H1 (cell line): ENCODE measurements at regions of chr7 and their contacts with region 1.

Region 1: GRCh38 chr7:106176414-106177299 is 64.5 kb upstream of the SYPL1 start:
- DNase-seq: peak; percentile 81 to 96
- H3K4me3 ChIP-seq: no peak overlapping the region
- H3K27ac ChIP-seq: no peak overlapping the region
- H3K4me1 ChIP-seq: peaks cover 0 to 5% (median 1%) of the 10 kb centered on the region in 4 experiments; a peak in 2 of 7 replicates
- H3K27me3 ChIP-seq: no peaks in the 10 kb centered on the region
- CTCF ChIP-seq: peak; percentile 91 to 99 (median 99)
- EP300 ChIP-seq: peak in 1 of 2 experiments; percentile 50; a peak in 1 of 3 replicates
- POLR2A ChIP-seq: peak in 1 of 2 experiments; percentile 49; a peak in 2 of 3 replicates
- RAD21 ChIP-seq: peak; percentile 99

Region 2: DNA sequence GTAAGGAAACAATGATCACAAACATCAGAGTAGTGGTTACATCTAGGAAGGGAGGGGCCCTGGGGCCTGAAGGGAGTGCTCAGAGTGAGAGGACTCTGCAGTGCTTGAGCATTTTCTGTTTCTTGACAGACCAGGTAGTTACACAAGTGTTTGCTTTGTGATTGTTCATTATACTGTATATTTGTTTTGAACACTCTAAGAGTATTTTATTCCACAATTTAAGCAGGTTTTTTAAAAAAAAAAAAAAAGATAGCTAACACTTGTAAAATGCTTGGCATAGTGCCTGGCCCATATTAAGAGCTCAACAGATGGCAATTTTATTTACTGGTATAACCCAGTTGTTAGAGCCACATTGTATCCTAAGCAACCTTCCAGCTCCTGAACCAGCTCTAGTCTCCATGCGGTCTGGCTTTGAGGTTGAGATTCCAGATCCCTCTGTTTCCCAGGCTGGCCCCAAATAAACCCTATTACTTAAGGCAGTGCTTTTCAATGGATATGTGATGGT is 280.2 kb before region 1 on chr7:
- CTCF ChIA-PET with region 1: no interaction called
- POLR2A ChIA-PET with region 1: no interaction called
- DNase-seq: no peak
- H3K4me3 ChIP-seq: no peak overlapping the region
- H3K27ac ChIP-seq: no peak overlapping the region
- H3K4me1 ChIP-seq: no peaks in the 10 kb centered on the region
- H3K27me3 ChIP-seq: no peaks in the 10 kb centered on the region
- CTCF ChIP-seq: no peak
- EP300 ChIP-seq: no peak
- POLR2A ChIP-seq: no peak
- RAD21 ChIP-seq: no peak

Region 3: GRCh38 chr7:106216517-106216922 is 39.9 kb after region 1 on chr7:
- CTCF ChIA-PET with region 1: interaction called, 11 read pairs
- POLR2A ChIA-PET with region 1: no interaction called
- DNase-seq: no peak
- H3K4me3 ChIP-seq: no peak overlapping the region
- H3K27ac ChIP-seq: no peak overlapping the region
- H3K4me1 ChIP-seq: no peaks in the 10 kb centered on the region
- H3K27me3 ChIP-seq: no peaks in the 10 kb centered on the region
- CTCF ChIP-seq: no peak
- EP300 ChIP-seq: no peak
- POLR2A ChIP-seq: no peak
- RAD21 ChIP-seq: no peak

Region 4: DNA sequence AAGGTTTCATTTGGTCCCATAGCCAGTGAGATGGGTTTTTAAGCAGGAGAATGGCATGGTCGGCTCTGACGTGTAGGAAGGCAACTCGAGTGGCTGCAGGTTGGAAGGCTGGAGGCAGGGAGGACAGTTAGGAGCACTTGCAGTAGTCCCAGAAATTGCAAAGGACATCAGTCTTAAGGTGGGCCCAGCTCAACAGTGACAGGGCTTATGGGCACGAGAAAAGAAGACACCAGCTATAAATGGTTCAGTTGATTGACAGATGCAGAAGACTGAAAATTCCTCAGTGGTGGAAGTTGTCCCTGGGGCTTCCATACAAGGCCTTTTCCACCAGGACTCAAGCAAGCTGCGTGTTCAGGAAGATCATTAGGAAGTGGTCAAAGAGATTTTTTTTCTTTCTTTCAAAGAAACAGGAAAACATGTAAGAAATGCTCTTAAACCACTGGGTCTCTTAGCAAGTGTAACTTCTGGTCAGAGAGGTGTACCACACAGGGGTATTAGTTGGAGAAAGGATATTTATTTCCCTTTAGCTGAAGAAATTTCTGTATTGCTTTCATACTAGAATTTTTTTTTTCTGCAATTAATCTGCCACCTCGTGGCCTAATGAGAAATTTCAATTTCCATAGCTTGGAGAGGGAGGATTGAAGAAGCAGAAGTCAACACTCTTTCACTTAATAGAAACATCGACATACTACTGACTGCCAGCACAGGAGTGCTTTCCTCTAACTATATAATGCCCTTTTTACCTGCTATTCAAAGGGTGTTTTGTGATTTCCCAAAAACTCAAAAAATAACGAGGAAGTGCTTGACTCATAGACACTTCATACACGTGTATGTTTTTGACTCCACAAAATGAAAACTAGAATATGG is 285.6 kb after region 1 on chr7:
- CTCF ChIA-PET with region 1: interaction called, 17 read pairs
- POLR2A ChIA-PET with region 1: no interaction called
- DNase-seq: no peak
- H3K4me3 ChIP-seq: no peak overlapping the region
- H3K27ac ChIP-seq: no peak overlapping the region
- H3K4me1 ChIP-seq: 0 out of 7 replicates have a peak, but pooled peaks cover 0 to 3% (median 0%) of the 10 kb centered on the region in 4 experiments
- H3K27me3 ChIP-seq: no peaks in the 10 kb centered on the region
- CTCF ChIP-seq: peak in 2 of 3 experiments; percentile 13; a peak in 2 of 4 replicates
- EP300 ChIP-seq: no peak
- POLR2A ChIP-seq: no peak
- RAD21 ChIP-seq: peak; percentile 36 to 40

Region 5: DNA sequence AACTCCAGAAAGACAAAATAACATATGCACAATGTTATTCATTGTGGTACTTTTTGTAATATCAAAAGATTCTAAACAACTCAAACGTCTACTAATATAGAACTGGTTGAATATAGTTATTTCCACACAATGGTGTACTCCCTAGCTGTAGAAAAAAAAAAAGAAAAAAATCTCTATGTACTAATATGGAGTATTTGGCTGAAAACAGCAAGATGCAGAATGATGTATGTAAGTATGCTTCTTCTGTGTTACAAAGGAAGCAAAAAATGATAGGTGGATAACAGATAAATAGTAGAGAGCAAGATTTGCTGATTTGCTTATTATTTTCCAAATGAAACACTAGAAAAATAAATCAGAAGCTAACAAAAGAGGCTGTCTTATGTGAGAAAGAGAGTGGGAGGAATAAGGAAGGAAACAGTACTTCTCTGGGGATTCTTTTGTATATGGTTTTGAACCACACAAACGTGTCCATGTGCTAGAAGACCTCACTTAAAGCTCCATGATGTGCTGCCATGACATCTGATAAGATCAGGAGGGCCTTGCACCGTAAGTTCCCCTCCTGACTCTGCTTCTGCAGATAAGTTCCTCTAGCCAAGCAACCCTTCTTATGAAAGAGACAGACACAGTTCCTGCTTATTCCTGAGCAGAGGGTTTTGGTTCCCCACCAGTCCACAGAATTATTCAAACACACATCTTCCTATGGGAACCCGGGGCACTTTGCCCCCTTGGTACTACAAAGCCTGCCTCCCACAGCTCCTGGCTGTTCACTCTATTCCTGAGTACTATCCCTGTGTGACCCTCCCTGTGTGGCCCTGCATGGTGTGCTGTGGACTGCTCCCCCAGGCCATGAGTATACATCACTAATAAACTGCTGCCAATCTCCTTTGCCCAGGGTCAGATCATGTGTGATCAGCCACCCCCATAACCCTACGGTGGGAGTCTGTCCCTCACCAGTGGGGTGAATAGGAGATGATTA is 325.2 kb after region 1 on chr7:
- CTCF ChIA-PET with region 1: no interaction called
- POLR2A ChIA-PET with region 1: no interaction called
- DNase-seq: no peak
- H3K4me3 ChIP-seq: no peak overlapping the region
- H3K27ac ChIP-seq: no peak overlapping the region
- H3K4me1 ChIP-seq: no peaks in the 10 kb centered on the region
- H3K27me3 ChIP-seq: no peaks in the 10 kb centered on the region
- CTCF ChIP-seq: no peak
- EP300 ChIP-seq: no peak
- POLR2A ChIP-seq: no peak
- RAD21 ChIP-seq: no peak